Esophagus squamous epithelium (tissue), 5 donors: ENCODE measurements at regions of chr22 and their contacts with region 1.

Region 1: DNA sequence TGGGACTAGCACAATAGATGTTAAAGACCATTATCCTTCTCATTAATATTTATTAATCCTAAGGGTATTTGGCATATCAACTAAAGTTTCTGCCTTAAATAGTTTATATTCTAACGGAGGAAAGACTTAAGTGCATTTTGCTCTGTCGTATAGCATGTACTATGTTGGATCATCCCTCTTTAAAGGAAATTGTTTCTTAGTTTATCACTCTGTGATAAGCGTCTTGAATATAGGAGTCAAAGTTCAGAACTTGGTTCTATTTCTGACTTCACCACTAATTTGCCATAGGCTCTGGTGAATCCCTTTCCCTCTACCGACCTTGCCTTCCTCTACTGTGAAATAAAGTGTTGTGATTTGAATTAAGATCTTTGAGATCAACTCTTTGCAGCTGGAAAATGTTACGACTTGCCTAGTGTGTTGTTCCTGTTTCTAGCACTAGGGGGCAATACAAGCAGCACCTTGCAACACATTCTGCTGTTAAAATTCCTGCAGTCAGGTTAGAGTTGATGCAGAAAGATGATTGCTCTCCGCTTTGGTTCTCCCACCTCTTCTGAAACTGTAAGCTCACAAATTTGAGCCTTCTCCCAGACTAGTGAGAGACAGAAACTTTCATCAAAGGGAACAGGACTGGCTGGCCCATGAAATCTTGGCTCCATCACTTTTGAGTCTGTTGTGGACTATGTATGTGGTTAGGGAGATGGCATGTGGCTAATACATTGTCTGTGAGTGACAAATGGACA is 27.8 kb upstream of the ZNRF3 start:
- DNase-seq: no peak
- H3K4me3 ChIP-seq: no peak overlapping the region
- H3K27ac ChIP-seq: no peak overlapping the region
- H3K4me1 ChIP-seq: no peaks in the 10 kb centered on the region
- H3K27me3 ChIP-seq: no peaks in the 10 kb centered on the region
- CTCF ChIP-seq: peak; percentile 86 to 95 (median 94)
- POLR2A ChIP-seq: no peak

Region 2: GRCh38 chr22:28989035-28989464 is 133.5 kb after region 1 on chr22:
- intact Hi-C with region 1: no loop called
- DNase-seq: no peak
- H3K4me3 ChIP-seq: no peak overlapping the region
- H3K27ac ChIP-seq: no peak overlapping the region
- H3K4me1 ChIP-seq: peaks cover 3 to 7% (median 6%) of the 10 kb centered on the region in 3 donors
- H3K27me3 ChIP-seq: no peaks in the 10 kb centered on the region
- CTCF ChIP-seq: no peak
- POLR2A ChIP-seq: no peak

Region 3: GRCh38 chr22:29040385-29041275 is 185.1 kb after region 1 on chr22:
- intact Hi-C with region 1: loop called (anchors 5 kb)
- DNase-seq: no peak
- H3K4me3 ChIP-seq: peak overlapping the region in 1 of 4 donors; percentile 9
- H3K27ac ChIP-seq: peak overlapping the region in 3 of 4 donors; percentile 2 to 37 (median 9)
- H3K4me1 ChIP-seq: peaks cover 11 to 49% (median 26%) of the 10 kb centered on the region in 3 donors
- H3K27me3 ChIP-seq: no peaks in the 10 kb centered on the region
- CTCF ChIP-seq: peak; percentile 87 to 97 (median 96)
- POLR2A ChIP-seq: no peak